ENCODE measurements at regions of chr14 and their contacts with region 1.

Region 1: GRCh38 chr14:88189417-88190191 is 133.5 kb downstream of the KCNK10 start:
- DNase-seq: peak; percentile 75
- H3K4me3 ChIP-seq: no peak overlapping the region
- H3K27ac ChIP-seq: no peak overlapping the region
- H3K4me1 ChIP-seq: no peaks in the 10 kb centered on the region
- H3K27me3 ChIP-seq: no peaks in the 10 kb centered on the region
- CTCF ChIP-seq: peak; percentile 47 to 58
- POLR2A ChIP-seq: no peak

Region 2: DNA sequence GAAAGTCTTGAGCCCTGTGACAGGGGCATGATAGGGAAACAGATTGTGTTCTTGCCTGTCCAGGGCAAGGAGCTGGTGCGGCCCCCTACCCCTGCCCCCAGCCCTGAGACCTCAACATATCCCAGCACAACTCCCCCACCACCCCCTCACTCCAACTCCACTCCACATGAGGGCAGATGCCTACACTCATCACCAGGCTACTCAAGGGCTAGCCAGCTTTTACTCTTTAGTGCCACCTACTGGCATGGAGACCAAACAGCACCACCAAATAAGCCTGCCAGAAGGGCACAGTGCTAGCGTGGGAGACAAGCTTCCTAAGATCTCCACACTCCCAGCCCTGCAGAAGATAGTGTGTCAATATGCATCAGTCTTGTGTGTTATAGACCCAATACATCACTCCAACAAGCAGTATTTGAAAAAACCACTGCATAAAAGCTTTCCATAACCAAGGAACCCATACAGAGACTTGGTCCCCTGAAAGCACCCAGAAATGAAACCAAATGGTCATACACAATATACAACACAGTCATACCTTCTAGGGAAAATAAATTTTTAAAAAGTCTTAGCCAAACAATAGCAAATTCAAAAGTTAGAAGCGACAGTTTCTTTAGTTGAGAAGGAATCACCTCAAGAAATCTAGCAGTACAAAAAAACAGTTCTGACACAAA is 21.0 kb before region 1 on chr14:
- CTCF ChIA-PET with region 1: interaction called, 13 read pairs
- POLR2A ChIA-PET with region 1: no interaction called
- dilution Hi-C with region 1: no loop called
- intact Hi-C with region 1: no loop called
- DNase-seq: peak; percentile 30
- H3K4me3 ChIP-seq: no peak overlapping the region
- H3K27ac ChIP-seq: no peak overlapping the region
- H3K4me1 ChIP-seq: no peaks in the 10 kb centered on the region
- H3K27me3 ChIP-seq: no peaks in the 10 kb centered on the region
- CTCF ChIP-seq: peak; percentile 70 to 81
- POLR2A ChIP-seq: no peak

Region 3: DNA sequence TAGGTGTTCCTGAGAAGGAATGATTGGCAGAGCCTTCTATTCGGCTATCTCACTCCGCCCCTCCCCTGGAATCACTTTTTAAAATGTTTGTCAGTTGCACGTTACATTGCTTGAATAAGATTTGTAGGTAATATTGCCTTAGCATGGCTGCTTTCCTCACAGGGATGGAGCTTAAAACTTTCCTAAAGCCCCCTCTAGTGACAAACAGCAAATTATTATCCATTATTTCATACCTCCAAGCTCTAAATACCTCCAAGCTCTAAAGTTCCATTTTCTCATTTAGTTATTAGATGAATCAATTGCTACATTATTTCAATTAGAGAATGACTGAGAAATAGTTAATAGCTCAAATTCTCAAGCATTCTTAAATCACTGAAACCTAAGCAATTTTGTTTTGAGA is 190.8 kb after region 1 on chr14:
- CTCF ChIA-PET with region 1: interaction called, 24 read pairs
- POLR2A ChIA-PET with region 1: no interaction called
- dilution Hi-C with region 1: no loop called
- intact Hi-C with region 1: loop called (anchors 2 kb)
- DNase-seq: no peak
- H3K4me3 ChIP-seq: no peak overlapping the region
- H3K27ac ChIP-seq: no peak overlapping the region
- H3K4me1 ChIP-seq: peaks cover 3% of the 10 kb centered on the region
- H3K27me3 ChIP-seq: peaks cover 11 to 22% of the 10 kb centered on the region in 2 experiments
- CTCF ChIP-seq: peak in 1 of 2 donors; percentile 1
- POLR2A ChIP-seq: no peak

Region 4: GRCh38 chr14:88437658-88438057 is 248.1 kb after region 1 on chr14:
- CTCF ChIA-PET with region 1: interaction called, 14 read pairs
- POLR2A ChIA-PET with region 1: no interaction called
- dilution Hi-C with region 1: no loop called
- intact Hi-C with region 1: loop called (anchors 2 kb)
- DNase-seq: no peak
- H3K4me3 ChIP-seq: no peak overlapping the region
- H3K27ac ChIP-seq: no peak overlapping the region
- H3K4me1 ChIP-seq: no peaks in the 10 kb centered on the region
- H3K27me3 ChIP-seq: no peaks in the 10 kb centered on the region
- CTCF ChIP-seq: peak; percentile 1 to 9
- POLR2A ChIP-seq: no peak

Region 5: DNA sequence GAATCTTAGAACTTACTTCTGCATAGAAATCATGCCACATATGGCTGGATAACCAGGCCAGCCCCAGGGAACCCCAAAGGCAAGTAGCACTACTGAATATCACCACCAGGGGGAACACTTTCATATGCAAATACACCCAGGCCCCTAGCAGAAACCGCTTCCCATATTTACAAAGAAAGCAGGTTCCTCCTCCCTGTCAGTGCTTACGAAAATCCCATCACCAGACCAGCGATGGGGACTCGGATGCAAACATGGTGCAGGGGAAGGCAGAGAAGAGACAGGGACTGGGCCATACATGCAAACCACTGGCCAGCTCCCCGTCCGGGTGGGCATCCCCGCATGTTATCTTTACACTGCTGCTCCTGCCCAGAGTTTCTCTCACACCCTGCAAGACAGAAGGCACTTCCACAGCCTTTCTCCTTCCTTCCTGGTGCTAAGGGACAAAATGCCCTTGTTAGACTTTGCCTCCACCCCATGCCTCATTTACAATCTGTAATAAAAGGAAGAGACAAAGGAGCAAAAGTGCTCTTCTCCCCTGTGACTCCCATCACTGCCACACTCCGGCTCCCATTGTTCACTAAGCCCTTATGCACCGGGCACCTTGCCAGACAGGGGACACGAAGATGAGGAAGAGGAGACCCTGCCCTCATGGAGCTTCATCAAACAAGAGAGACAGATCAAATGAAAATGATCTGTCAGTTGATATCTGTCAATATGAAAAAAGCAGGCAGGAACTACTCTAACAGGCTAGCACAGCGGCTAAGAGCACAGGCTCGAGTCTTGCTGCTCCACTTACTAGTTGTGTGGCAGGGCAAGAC is 302.9 kb after region 1 on chr14:
- CTCF ChIA-PET with region 1: interaction called, 5 read pairs
- POLR2A ChIA-PET with region 1: no interaction called
- dilution Hi-C with region 1: no loop called
- intact Hi-C with region 1: loop called (anchors 5 kb)
- DNase-seq: peak; percentile 72
- H3K4me3 ChIP-seq: no peak overlapping the region
- H3K27ac ChIP-seq: no peak overlapping the region
- H3K4me1 ChIP-seq: no peaks in the 10 kb centered on the region
- H3K27me3 ChIP-seq: no peaks in the 10 kb centered on the region
- CTCF ChIP-seq: peak; percentile 72 to 79
- POLR2A ChIP-seq: no peak

Region 6: GRCh38 chr14:88562831-88563686 is 373.5 kb after region 1 on chr14 and contains the start of gene ZC3H14:
- CTCF ChIA-PET with region 1: interaction called, 14 read pairs
- POLR2A ChIA-PET with region 1: no interaction called
- dilution Hi-C with region 1: no loop called
- intact Hi-C with region 1: loop called (anchors 5 kb)
- DNase-seq: peak; percentile 93
- H3K4me3 ChIP-seq: peak within 1 kb of the TSS; percentile 77 to 96 (median 86)
- H3K27ac ChIP-seq: peak within 1 kb of the TSS; percentile 72
- H3K4me1 ChIP-seq: peaks cover 14% of the 10 kb centered on the region
- H3K27me3 ChIP-seq: no peaks in the 10 kb centered on the region
- CTCF ChIP-seq: no peak
- POLR2A ChIP-seq: peak; percentile 83
- total RNA-seq, gene ZC3H14: 59.6 and 61.8 TPM in 2 replicates

Measured in endothelial cell of umbilical vein (primary cell).